GM12878 (cell line): ENCODE measurements at regions of chr11 and their contacts with region 1.

Region 1: GRCh38 chr11:127816962-127817361 is 770.4 kb downstream of the ETS1 start:
- DNase-seq: no peak
- ATAC-seq: no peak
- H3K4me3 ChIP-seq: no peak overlapping the region
- H3K27ac ChIP-seq: no peak overlapping the region
- H3K4me1 ChIP-seq: no peaks in the 10 kb centered on the region
- H3K27me3 ChIP-seq: no peaks in the 10 kb centered on the region
- CTCF ChIP-seq: no peak
- EP300 ChIP-seq: no peak
- POLR2A ChIP-seq: no peak
- RAD21 ChIP-seq: no peak

Region 2: GRCh38 chr11:127733552-127733951 is 83.4 kb before region 1 on chr11:
- CTCF ChIA-PET with region 1: no interaction called
- POLR2A ChIA-PET with region 1: no interaction called
- RAD21 ChIA-PET with region 1: no interaction called
- SMC1A ChIA-PET with region 1: no interaction called
- in situ Hi-C with region 1: no loop called
- intact Hi-C with region 1: no loop called
- DNase-seq: no peak
- ATAC-seq: no peak
- H3K4me3 ChIP-seq: no peak overlapping the region
- H3K27ac ChIP-seq: no peak overlapping the region
- H3K4me1 ChIP-seq: no peaks in the 10 kb centered on the region
- H3K27me3 ChIP-seq: no peaks in the 10 kb centered on the region
- CTCF ChIP-seq: no peak
- EP300 ChIP-seq: no peak
- POLR2A ChIP-seq: no peak
- RAD21 ChIP-seq: no peak

Region 3: GRCh38 chr11:127843483-127844396 is 26.8 kb after region 1 on chr11:
- CTCF ChIA-PET with region 1: interaction called, 10 read pairs
- POLR2A ChIA-PET with region 1: no interaction called
- RAD21 ChIA-PET with region 1: no interaction called
- SMC1A ChIA-PET with region 1: no interaction called
- in situ Hi-C with region 1: no loop called
- intact Hi-C with region 1: no loop called
- DNase-seq: no peak
- ATAC-seq: peak; percentile 84
- H3K4me3 ChIP-seq: no peak overlapping the region
- H3K27ac ChIP-seq: no peak overlapping the region
- H3K4me1 ChIP-seq: no peaks in the 10 kb centered on the region
- H3K27me3 ChIP-seq: no peaks in the 10 kb centered on the region
- CTCF ChIP-seq: peak; percentile 57 to 85 (median 63)
- EP300 ChIP-seq: no peak
- POLR2A ChIP-seq: no peak
- RAD21 ChIP-seq: 0 out of 2 replicates have a peak, but pooled peaks have one; percentile 24